ENCODE measurements at regions of chr22 and their contacts with region 1.

Region 1: DNA sequence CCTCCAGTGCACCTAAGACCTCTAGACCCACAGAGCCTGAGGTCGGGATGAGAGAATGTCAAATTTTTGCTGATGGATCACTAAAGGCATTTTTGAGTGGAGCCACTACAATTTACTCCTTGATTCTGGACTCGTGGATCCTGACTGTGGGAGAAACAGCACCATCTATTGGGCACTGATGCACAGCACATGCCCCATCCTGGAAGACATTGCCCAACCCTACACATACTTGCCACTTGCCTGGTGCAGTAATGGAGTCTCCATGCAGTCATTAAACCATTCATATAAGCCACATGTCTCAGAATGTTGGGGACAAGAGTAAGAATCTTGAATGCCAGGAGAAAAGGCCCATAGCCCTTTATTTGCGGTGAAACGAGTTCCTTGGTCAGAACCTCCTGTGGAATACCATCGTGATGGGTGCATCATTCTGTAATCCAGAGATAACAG is 103.9 kb downstream of the GGTLC2 start:
- DNase-seq: peak; percentile 52
- ATAC-seq: peak; percentile 98
- H3K4me3 ChIP-seq: no peak overlapping the region
- H3K27ac ChIP-seq: no peak overlapping the region
- H3K4me1 ChIP-seq: no peaks in the 10 kb centered on the region
- H3K27me3 ChIP-seq: peaks cover 9% of the 10 kb centered on the region
- CTCF ChIP-seq: peak; percentile 82
- POLR2A ChIP-seq: no peak
- RAD21 ChIP-seq: peak; percentile 79

Region 2: DNA sequence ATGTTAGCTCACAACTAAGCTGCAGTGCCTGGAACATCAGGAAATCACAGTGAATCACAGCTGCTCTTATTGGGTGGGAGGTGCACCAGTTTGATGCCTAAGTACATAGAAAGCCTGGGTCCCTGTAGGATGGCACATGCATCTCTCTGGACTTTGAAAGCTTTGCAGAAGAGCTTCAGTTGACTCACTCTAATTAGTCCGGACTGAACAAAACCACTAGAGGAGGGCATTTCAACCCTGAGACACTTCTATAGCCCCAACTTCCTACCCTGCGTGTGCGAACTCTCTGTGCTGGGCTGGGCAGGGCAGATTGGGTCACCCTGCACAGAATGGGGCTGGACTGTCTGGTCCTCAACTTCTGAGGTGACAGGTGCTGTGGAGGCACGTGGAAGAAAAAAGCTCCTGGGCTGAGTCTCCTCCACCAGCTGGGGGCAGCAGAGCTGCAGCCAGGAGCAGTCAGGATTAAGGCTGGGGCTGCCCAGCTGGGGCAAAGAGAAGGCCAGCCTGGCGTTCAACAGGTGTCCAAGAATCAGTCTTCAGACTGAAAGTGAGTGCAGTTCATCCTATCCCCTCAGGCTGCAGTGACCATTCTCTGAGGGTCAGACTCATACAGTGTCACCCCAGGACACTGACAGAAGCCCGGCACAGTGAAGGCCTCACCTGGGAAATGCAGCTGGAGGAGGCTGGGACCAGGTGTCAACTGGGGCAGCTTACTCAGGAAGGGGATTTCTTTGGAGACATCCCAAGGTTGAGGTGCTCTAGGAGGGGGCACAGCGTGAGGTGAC is 81.8 kb before region 1 on chr22:
- CTCF ChIA-PET with region 1: interaction called, 5 read pairs
- POLR2A ChIA-PET with region 1: no interaction called
- dilution Hi-C with region 1: no loop called
- in situ Hi-C with region 1: no loop called
- intact Hi-C with region 1: loop called (anchors 10 kb)
- DNase-seq: peak; percentile 46
- ATAC-seq: peak; percentile 94
- H3K4me3 ChIP-seq: no peak overlapping the region
- H3K27ac ChIP-seq: no peak overlapping the region
- H3K4me1 ChIP-seq: no peaks in the 10 kb centered on the region
- H3K27me3 ChIP-seq: peaks cover 39% of the 10 kb centered on the region
- CTCF ChIP-seq: peak; percentile 78
- POLR2A ChIP-seq: no peak
- RAD21 ChIP-seq: peak; percentile 79

Region 3: GRCh38 chr22:22710719-22711531 is 37.4 kb before region 1 on chr22:
- CTCF ChIA-PET with region 1: no interaction called
- POLR2A ChIA-PET with region 1: no interaction called
- dilution Hi-C with region 1: no loop called
- in situ Hi-C with region 1: no loop called
- intact Hi-C with region 1: loop called (anchors 5 kb)
- DNase-seq: peak; percentile 17
- ATAC-seq: peak; percentile 61
- H3K4me3 ChIP-seq: no peak overlapping the region
- H3K27ac ChIP-seq: no peak overlapping the region
- H3K4me1 ChIP-seq: no peaks in the 10 kb centered on the region
- H3K27me3 ChIP-seq: peaks cover 3% of the 10 kb centered on the region; the same call in 1 of the 2 replicates
- CTCF ChIP-seq: peak; percentile 66
- POLR2A ChIP-seq: no peak
- RAD21 ChIP-seq: peak; percentile 33; the same call in 1 of the 2 replicates

Region 4: GRCh38 chr22:23205339-23206049 is 457.2 kb after region 1 on chr22:
- CTCF ChIA-PET with region 1: no interaction called
- POLR2A ChIA-PET with region 1: no interaction called
- dilution Hi-C with region 1: no loop called
- in situ Hi-C with region 1: no loop called
- intact Hi-C with region 1: no loop called
- DNase-seq: no peak
- ATAC-seq: no peak
- H3K4me3 ChIP-seq: no peak overlapping the region
- H3K27ac ChIP-seq: no peak overlapping the region
- H3K4me1 ChIP-seq: no peaks in the 10 kb centered on the region; the same call in 1 of the 2 replicates
- H3K27me3 ChIP-seq: no peaks in the 10 kb centered on the region
- CTCF ChIP-seq: no peak
- POLR2A ChIP-seq: no peak
- RAD21 ChIP-seq: no peak